SK-N-SH (cell line): ENCODE measurements at regions of chr14 and their contacts with region 1.

Region 1: DNA sequence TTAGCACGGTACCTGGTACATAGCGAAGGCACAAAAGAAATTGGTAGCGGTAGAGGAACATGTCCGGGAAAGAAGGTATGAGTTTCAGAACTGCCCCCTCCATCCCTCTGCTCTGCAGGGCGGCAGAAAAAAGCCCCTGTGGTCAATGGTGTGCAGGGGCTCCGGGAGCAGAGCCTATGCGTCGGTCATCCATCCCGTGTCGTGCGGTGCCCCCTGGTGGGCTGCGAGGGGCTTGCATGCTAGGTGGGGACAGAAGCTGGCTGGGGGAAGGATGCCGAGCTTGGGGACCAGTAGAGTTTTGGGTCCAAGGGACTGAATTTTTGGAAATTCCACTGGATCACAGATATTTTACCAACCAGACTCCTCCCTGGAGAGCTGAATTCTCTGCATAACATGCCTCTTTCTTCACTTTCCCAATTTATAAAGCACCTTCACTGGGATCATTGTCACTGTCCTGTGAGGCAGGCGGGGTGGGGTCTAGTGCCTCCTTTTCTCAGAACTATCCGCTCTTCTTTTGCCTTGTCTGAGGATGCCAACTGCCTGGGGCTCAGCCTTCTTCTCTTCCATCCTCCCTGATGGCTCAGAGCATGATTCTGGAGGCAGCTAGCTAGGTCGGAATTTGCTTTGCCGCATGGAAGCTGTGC is 148.7 kb downstream of the SMOC1 start:
- DNase-seq: peak; percentile 88
- H3K4me3 ChIP-seq: peak overlapping the region in 1 of 2 experiments; percentile 50; a peak in 1 of 4 replicates
- H3K27ac ChIP-seq: no peak overlapping the region
- H3K4me1 ChIP-seq: no peaks in the 10 kb centered on the region
- H3K27me3 ChIP-seq: no peaks in the 10 kb centered on the region
- CTCF ChIP-seq: peak; percentile 60
- EP300 ChIP-seq: no peak
- RAD21 ChIP-seq: peak; percentile 97

Region 2: DNA sequence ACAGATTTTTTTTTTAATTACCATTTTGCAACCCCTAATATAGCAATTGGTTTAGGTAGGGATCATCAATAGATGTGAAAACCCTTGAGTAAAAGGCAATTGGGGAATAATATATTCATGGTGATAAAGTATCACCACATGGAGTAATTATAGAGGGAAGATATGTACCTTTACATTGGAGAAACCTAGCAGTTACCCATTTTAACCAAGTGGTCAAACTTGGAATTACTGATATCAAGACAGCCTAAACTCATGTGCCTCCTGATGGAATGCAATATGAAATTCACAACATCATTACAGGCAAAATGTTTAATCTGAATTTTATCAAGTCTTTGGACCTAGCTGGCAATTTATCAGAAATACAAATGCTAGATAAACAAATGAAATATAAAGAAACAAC is 224.2 kb before region 1 on chr14:
- CTCF ChIA-PET with region 1: interaction called, 10 read pairs
- POLR2A ChIA-PET with region 1: no interaction called
- DNase-seq: no peak
- H3K4me3 ChIP-seq: no peak overlapping the region
- H3K27ac ChIP-seq: no peak overlapping the region
- H3K4me1 ChIP-seq: no peaks in the 10 kb centered on the region
- H3K27me3 ChIP-seq: no peaks in the 10 kb centered on the region
- CTCF ChIP-seq: peak; percentile 23; the same call in 1 of the 2 replicates
- EP300 ChIP-seq: no peak
- RAD21 ChIP-seq: no peak

Region 3: DNA sequence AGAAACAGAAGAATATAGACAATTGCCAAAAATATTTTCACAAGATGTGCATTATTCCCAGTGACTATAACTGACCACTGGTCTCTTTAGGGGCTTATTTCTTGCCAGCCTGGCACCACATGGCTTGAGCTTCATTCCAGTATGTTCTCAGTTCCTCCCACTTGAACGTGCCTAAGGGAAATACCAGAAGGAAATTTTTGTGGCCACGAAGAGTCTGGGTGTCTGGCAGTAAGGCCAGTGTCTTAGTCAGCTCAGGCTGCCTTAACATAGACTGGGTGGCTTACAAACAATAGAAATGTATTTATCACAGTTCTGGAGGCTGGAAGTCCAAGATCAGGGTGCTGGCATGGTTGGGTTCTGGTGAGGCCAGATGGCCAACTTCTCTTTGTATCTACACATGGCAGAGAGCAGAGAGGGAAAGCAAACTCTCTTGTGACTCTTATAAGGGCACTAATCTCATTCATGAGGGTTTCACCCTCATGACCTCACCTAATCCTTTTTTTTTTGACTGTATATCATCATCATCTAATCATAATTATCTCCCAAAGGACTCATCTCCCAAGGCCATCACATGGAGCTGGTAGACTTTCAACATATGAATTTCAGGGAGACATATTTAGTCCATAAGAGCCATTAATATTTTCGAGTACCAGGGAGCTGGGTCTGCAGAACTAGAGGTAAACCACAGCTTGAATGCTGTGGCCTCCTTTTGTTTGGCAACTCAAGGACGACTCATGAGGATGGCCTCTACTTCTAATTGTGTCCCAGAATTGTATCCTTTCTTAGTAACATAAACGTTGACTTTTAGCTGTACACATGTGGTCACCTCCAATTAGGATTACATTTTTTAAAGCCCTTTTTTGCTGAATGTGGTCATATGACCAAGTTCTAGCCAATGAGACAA is 153.8 kb before region 1 on chr14:
- CTCF ChIA-PET with region 1: interaction called, 113 read pairs
- POLR2A ChIA-PET with region 1: interaction called, 4 read pairs
- DNase-seq: no peak
- H3K4me3 ChIP-seq: no peak overlapping the region
- H3K27ac ChIP-seq: no peak overlapping the region
- H3K4me1 ChIP-seq: peaks cover 0 to 5% of the 10 kb centered on the region in 2 experiments; a peak in 1 of 4 replicates
- H3K27me3 ChIP-seq: 0 out of 2 replicates have a peak, but pooled peaks cover 3% of the 10 kb centered on the region
- CTCF ChIP-seq: no peak
- EP300 ChIP-seq: no peak
- RAD21 ChIP-seq: no peak

Region 4: DNA sequence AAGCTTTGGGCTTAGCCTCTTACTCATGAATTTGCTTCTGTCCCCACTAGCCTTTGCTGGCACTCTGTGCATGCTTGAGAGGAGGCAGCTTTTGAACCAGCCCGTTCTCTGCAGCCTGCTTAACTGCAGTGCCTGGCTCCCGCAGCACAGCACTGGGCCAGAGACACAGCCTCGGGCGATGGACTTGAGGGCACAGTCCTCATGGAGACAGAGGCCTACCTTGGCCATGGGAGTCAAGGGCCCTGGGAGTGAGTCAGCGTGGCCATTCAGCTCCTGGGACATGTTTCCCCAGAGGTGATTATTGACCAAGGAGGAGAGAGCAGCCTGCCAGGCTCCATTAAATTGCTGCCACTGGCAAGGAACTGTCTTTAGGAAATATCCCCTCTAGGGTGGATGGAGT is 55.2 kb before region 1 on chr14:
- CTCF ChIA-PET with region 1: interaction called, 10 read pairs
- POLR2A ChIA-PET with region 1: no interaction called
- DNase-seq: no peak
- H3K4me3 ChIP-seq: no peak overlapping the region
- H3K27ac ChIP-seq: no peak overlapping the region
- H3K4me1 ChIP-seq: peaks cover 0 to 12% of the 10 kb centered on the region in 2 experiments; a peak in 2 of 4 replicates
- H3K27me3 ChIP-seq: no peaks in the 10 kb centered on the region
- CTCF ChIP-seq: no peak
- EP300 ChIP-seq: no peak
- RAD21 ChIP-seq: no peak

Region 5: DNA sequence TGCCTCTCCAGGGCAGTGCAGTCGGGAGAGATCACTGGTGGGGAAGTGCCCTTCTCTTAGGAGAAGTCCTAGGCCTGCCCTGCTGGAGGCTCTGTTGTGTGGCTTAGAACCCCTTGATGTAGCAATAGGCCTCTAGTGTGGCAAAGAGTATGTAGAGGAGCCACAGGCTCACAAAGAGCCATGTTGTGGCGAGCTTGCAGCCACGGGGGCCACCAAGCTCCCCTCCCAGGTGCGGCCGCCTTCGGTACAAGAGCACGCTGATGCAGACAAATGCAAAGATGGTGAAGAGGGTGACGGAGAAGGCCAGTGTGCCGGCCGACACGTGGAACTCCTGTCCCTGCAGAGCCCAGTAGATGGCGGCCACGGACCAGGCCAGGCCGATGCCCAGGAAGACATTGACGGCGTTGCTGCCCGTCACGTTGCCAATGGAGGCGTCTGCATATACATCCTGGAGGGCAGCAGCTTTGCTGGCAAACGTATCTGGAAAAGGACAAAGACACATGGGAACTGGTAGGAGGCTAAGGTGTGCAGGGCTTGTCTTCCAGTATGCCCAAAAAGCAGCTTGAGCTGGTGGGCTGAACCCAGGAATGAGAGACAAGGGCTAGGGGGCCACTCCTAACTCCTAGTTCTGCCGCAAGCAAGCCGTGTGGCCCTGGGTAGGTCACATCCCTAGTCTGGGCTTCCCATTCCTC is 18.1 kb after region 1 on chr14:
- CTCF ChIA-PET with region 1: interaction called, 21 read pairs
- POLR2A ChIA-PET with region 1: interaction called, 3 read pairs
- DNase-seq: peak; percentile 82
- H3K4me3 ChIP-seq: peak overlapping the region in 1 of 2 experiments; percentile 39; a peak in 1 of 4 replicates
- H3K27ac ChIP-seq: peak overlapping the region in 1 of 2 experiments; percentile 40; a peak in 2 of 4 replicates
- H3K4me1 ChIP-seq: peaks cover 0 to 18% of the 10 kb centered on the region in 2 experiments; a peak in 1 of 4 replicates
- H3K27me3 ChIP-seq: no peaks in the 10 kb centered on the region
- CTCF ChIP-seq: peak; percentile 47
- EP300 ChIP-seq: no peak
- RAD21 ChIP-seq: peak; percentile 96

Region 6: GRCh38 chr14:70108419-70108818 is 80.5 kb after region 1 on chr14:
- CTCF ChIA-PET with region 1: no interaction called
- POLR2A ChIA-PET with region 1: no interaction called
- DNase-seq: no peak
- H3K4me3 ChIP-seq: no peak overlapping the region
- H3K27ac ChIP-seq: peak overlapping the region in 1 of 2 experiments; percentile 54; a peak in 2 of 4 replicates
- H3K4me1 ChIP-seq: peaks cover 0 to 13% of the 10 kb centered on the region in 2 experiments; a peak in 2 of 4 replicates
- H3K27me3 ChIP-seq: no peaks in the 10 kb centered on the region
- CTCF ChIP-seq: no peak
- EP300 ChIP-seq: no peak
- RAD21 ChIP-seq: no peak

Region 7: GRCh38 chr14:70257531-70257930 is 229.6 kb after region 1 on chr14:
- CTCF ChIA-PET with region 1: no interaction called
- POLR2A ChIA-PET with region 1: no interaction called
- DNase-seq: no peak
- H3K4me3 ChIP-seq: no peak overlapping the region
- H3K27ac ChIP-seq: no peak overlapping the region
- H3K4me1 ChIP-seq: no peaks in the 10 kb centered on the region
- H3K27me3 ChIP-seq: no peaks in the 10 kb centered on the region
- CTCF ChIP-seq: peak; percentile 30
- EP300 ChIP-seq: no peak
- RAD21 ChIP-seq: no peak

Region 8: DNA sequence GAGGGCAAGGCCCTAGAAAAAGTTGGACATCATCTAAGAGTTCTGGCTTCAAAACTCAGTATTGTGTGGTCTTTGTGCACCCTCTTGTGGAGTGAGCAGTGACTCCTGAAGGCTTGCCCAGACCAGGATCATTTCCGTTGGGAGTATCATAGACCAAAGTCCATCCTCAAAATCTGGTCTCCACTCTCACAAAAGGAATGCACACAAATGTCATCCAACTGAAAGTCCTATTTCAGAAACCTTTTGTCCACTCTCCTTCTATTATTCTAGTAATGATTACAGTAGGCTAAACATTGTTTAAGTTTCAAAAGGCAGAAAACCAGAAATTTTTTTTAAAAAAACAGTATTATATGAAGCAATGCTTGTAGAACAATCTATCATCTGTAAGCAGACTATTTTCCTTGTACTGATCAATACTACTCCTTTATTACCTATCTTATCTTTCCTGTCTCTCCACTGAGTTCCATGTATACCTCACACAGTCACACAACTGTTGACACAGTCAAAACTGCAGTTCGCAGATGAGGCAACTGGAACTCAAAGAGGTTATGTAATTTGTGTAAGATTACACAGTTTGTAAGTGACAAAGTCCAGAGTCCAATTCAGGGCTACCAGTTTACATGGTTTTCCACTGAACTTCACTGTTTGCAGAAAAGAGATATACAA is 290.2 kb after region 1 on chr14:
- CTCF ChIA-PET with region 1: interaction called, 23 read pairs
- POLR2A ChIA-PET with region 1: no interaction called
- DNase-seq: peak; percentile 63
- H3K4me3 ChIP-seq: no peak overlapping the region; a peak in 1 of 4 replicates
- H3K27ac ChIP-seq: no peak overlapping the region
- H3K4me1 ChIP-seq: no peaks in the 10 kb centered on the region; a peak in 1 of 4 replicates
- H3K27me3 ChIP-seq: no peaks in the 10 kb centered on the region
- CTCF ChIP-seq: peak; percentile 58
- EP300 ChIP-seq: no peak
- RAD21 ChIP-seq: peak; percentile 95